H1 (cell line): ENCODE measurements at regions of chr3 and their contacts with region 1.

Region 1: GRCh38 chr3:72329354-72329753 is 518.9 kb downstream of the SHQ1 start:
- DNase-seq: no peak
- H3K4me3 ChIP-seq: no peak overlapping the region
- H3K27ac ChIP-seq: no peak overlapping the region
- H3K4me1 ChIP-seq: peaks cover 2 to 8% (median 4%) of the 10 kb centered on the region in 4 experiments; a peak in 6 of 7 replicates
- H3K27me3 ChIP-seq: no peaks in the 10 kb centered on the region; a peak in 1 of 7 replicates
- CTCF ChIP-seq: no peak
- EP300 ChIP-seq: no peak
- POLR2A ChIP-seq: no peak
- RAD21 ChIP-seq: no peak

Region 2: GRCh38 chr3:72155391-72156064 is 173.8 kb before region 1 on chr3:
- CTCF ChIA-PET with region 1: no interaction called
- POLR2A ChIA-PET with region 1: no interaction called
- DNase-seq: no peak
- H3K4me3 ChIP-seq: no peak overlapping the region
- H3K27ac ChIP-seq: no peak overlapping the region
- H3K4me1 ChIP-seq: no peaks in the 10 kb centered on the region
- H3K27me3 ChIP-seq: no peaks in the 10 kb centered on the region
- CTCF ChIP-seq: no peak
- EP300 ChIP-seq: no peak
- POLR2A ChIP-seq: no peak
- RAD21 ChIP-seq: no peak

Region 3: GRCh38 chr3:72339116-72340030 is 10.0 kb after region 1 on chr3:
- CTCF ChIA-PET with region 1: interaction called, 14 read pairs
- POLR2A ChIA-PET with region 1: no interaction called
- DNase-seq: no peak
- H3K4me3 ChIP-seq: no peak overlapping the region
- H3K27ac ChIP-seq: no peak overlapping the region
- H3K4me1 ChIP-seq: peaks cover 3 to 17% (median 9%) of the 10 kb centered on the region in 4 experiments
- H3K27me3 ChIP-seq: no peaks in the 10 kb centered on the region; a peak in 1 of 7 replicates
- CTCF ChIP-seq: no peak
- EP300 ChIP-seq: no peak
- POLR2A ChIP-seq: no peak
- RAD21 ChIP-seq: no peak